ENCODE measurements at regions of chr20 and their contacts with region 1.

Region 1: GRCh38 chr20:18056174-18057100 is 1.3 kb downstream of the OVOL2 start:
- DNase-seq: peak; percentile 22 to 53 (median 32)
- ATAC-seq: peak; percentile 22
- H3K4me3 ChIP-seq: peak overlapping the region; percentile 86 to 90
- H3K27ac ChIP-seq: peak overlapping the region in 3 of 4 donors; percentile 81 to 86 (median 85)
- H3K4me1 ChIP-seq: peaks cover 28% of the 10 kb centered on the region
- H3K27me3 ChIP-seq: no peaks in the 10 kb centered on the region
- CTCF ChIP-seq: no peak
- POLR2A ChIP-seq: peak in 1 of 3 donors; percentile 20

Region 2: DNA sequence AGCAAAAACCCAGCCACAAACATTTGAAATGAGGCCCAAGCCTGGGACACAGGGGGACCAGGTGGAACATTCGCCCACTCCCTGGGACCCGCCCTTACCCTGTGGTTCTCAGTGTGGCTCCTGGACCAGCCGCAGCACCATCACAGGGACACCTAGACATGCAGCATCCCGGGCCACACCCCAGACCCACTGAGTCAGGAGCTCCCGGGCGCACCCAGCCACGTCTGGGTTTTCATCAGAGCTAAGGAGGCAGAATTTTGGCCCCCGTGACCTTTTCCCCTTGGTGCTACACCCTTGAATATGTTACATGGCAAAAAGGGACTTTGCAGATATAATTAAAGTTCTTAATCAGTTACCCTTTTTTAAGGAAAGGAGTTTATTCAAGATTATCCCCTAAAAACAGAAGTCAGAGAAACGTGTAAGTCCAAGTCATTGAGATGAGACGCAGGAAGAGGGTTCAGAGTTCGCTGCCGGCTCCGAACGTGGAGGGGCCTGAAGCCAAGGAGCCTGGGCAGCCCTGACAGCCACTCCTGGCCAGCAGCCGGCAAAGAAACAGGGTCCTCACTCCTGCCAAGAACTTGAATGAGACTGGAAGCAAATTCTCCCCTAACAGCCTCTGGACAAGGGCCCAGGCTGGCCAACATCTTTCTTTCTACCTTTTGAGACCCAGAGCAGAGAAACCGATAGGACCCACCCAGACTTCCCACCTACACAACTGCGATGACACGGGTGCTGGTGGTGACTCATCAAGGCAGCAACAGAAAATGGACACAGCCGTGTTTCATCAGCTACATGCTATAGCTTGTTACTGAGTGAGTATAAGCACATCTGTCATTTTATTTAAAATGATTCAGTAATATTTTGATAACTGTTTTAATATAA is 550.6 kb before region 1 on chr20:
- intact Hi-C with region 1: no loop called
- DNase-seq: no peak
- ATAC-seq: no peak
- H3K4me3 ChIP-seq: no peak overlapping the region
- H3K27ac ChIP-seq: peak overlapping the region in 2 of 4 donors; percentile 18 to 25
- H3K4me1 ChIP-seq: peaks cover 12% of the 10 kb centered on the region
- H3K27me3 ChIP-seq: no peaks in the 10 kb centered on the region
- CTCF ChIP-seq: no peak
- POLR2A ChIP-seq: no peak

Region 3: DNA sequence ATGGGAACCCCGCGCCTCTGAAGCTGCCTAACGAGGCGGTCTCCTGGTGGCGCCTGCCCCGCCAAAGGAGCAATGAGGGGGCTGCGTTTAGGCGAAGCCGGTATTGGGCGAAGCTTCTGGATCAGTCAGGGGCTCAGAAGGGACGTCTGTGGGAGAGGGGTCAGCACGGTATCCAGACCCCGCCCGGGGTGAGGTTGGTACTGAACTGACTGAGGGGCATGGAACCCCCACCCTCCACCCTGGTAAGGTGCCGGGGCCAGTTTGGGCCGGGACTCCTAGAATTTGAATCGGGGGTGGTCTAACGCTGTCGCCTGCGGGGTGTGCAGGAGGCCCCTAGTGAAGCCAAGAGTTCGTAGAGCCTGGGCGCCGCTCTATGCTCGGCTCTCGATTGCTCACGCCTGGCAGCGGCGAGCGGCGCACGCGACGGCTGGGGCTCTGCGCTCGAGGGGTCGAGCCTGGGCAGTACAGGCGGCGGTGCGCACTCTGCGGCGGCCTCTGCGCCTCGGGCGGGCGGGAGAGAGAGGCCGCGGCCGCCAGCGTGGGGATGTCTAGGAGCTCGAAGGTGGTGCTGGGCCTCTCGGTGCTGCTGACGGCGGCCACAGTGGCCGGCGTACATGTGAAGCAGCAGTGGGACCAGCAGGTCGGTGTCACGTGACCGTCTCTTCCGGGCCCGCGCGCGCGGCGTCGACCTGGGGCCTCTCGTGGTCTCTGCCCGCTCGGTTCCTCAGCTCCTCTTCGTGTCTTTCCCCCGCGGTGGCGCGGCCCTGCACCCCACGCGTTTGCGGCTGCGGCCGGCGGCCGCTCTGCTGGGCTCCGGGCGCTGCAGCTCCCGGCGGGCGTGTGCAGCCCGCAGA is 81.2 kb after region 1 on chr20 and contains the starts of genes KAT14 and PET117:
- intact Hi-C with region 1: loop called (anchors 10 kb)
- DNase-seq: peak; percentile 87 to 90 (median 88)
- ATAC-seq: peak; percentile 97
- H3K4me3 ChIP-seq: peak within 1 kb of the TSS; percentile 53 to 96
- H3K27ac ChIP-seq: peak within 1 kb of the TSS; percentile 76 to 94 (median 85)
- H3K4me1 ChIP-seq: peaks cover 28% of the 10 kb centered on the region
- H3K27me3 ChIP-seq: no peaks in the 10 kb centered on the region
- CTCF ChIP-seq: peak in 3 of 7 experiments; percentile 2 to 18 (median 12)
- POLR2A ChIP-seq: peak; percentile 50 to 72 (median 70)
- total RNA-seq, gene KAT14: 7.9 to 8.8 TPM
- total RNA-seq, gene PET117: 9.1 to 13.2 TPM

Region 4: GRCh38 chr20:18496740-18497592 is 440.5 kb after region 1 on chr20 and contains the start of gene RBBP9:
- intact Hi-C with region 1: no loop called
- DNase-seq: peak; percentile 85 to 88 (median 88)
- ATAC-seq: peak; percentile 100
- H3K4me3 ChIP-seq: peak within 1 kb of the TSS; percentile 35 to 72
- H3K27ac ChIP-seq: peak within 1 kb of the TSS in 3 of 4 donors; percentile 19 to 62 (median 58)
- H3K4me1 ChIP-seq: peaks cover 13% of the 10 kb centered on the region
- H3K27me3 ChIP-seq: no peaks in the 10 kb centered on the region
- CTCF ChIP-seq: no peak
- POLR2A ChIP-seq: peak in 2 of 3 donors; percentile 54
- total RNA-seq, gene RBBP9: 6.6 to 8.3 TPM